ENCODE measurements at regions of chr15 and their contacts with region 1.

Region 1: DNA sequence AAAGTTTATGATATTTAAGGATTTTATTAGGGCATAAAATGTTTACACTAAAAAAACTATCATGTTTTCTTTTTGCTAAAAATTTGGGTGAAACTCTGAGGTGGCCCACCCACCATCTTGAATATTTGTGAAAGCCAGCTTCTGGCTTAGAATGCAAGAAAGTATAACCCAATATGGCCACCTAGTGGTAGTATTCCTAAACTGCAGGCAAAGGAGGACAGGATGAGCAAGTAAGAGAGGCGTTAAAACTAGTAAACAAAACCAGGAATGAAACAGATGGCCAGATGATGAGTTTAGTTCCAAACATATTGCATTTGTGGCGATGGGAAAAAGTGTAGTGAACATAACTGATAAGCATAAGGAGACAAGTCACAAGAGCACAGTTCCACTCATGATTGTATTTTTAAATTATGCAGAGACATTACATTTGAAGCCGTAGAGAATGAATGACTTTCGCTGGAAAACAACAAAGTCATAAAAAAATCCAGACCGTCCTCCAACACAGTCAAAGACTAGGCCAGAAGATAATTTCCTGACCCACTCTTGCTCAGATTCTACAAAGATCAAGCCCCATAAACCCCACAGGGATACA is 103.3 kb upstream of the PRTG start:
- DNase-seq: peak; percentile 61
- H3K4me3 Mint-ChIP-seq: no peak overlapping the region
- H3K27ac Mint-ChIP-seq: no peak overlapping the region
- H3K4me1 Mint-ChIP-seq: no peaks in the 10 kb centered on the region
- H3K27me3 Mint-ChIP-seq: no peaks in the 10 kb centered on the region

Region 2: GRCh38 chr15:55526559-55527036 is 319.6 kb before region 1 on chr15:
- CTCF ChIA-PET with region 1: interaction called, 6 read pairs
- intact Hi-C with region 1: loop called (anchors 10 kb)
- DNase-seq: peak; percentile 31
- H3K4me3 Mint-ChIP-seq: no peak overlapping the region
- H3K27ac Mint-ChIP-seq: no peak overlapping the region
- H3K4me1 Mint-ChIP-seq: no peaks in the 10 kb centered on the region
- H3K27me3 Mint-ChIP-seq: peaks cover 24% of the 10 kb centered on the region

Region 3: DNA sequence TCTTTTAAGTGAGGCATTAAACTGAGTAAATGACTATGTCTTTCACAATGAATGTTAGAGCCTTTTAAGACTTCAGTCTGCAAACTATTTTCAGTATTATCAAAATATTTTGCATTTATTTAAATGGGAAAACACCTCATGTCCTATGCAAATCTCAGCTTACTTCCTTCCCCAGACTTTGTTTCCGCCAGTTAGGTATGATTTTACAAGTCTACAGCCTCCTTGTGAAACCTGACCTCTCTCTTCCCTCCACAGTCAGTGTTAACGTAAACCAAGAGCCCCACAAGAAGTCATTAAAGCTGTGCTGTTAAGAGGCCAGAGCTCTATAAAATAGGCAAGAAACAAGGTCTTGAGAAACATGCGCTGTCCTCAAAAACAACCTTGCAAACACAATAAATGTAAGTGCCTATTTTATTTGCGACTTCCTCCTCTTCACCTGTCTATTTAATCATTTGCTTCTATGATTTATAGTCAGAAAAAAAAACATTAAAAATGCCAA is 151.5 kb before region 1 on chr15:
- CTCF ChIA-PET with region 1: no interaction called
- intact Hi-C with region 1: no loop called
- DNase-seq: no peak
- H3K4me3 Mint-ChIP-seq: no peak overlapping the region
- H3K27ac Mint-ChIP-seq: no peak overlapping the region
- H3K4me1 Mint-ChIP-seq: peaks cover 3% of the 10 kb centered on the region
- H3K27me3 Mint-ChIP-seq: peaks cover 15% of the 10 kb centered on the region

Region 4: DNA sequence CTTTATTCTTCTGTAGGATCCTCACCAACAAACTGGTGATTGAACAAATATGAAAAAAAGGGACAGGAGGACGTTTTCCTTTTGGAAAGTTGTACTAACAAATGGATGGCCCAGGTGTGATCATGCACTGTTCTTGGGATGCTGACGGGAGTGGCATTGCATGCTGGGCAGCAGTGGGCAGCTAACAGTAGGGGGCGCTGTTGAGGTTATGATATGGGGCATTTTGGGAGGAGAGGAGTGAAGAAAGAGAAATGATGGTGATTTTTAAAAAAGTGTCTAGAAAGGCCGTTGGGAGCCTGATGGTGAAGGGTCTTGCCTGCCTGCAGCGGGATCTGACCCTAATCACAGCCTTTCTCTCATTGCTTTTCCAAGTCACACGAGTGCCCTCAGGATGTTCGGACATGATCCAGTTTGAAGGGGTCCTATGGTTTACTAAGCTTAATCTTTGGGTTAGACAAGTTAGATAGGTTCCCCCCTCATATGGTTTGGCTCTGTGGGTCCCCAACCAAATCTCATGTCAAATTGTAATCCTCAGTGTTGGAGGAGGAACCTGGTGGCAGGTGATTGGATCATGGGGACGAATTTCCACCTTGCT is 57.0 kb before region 1 on chr15:
- CTCF ChIA-PET with region 1: interaction called, 5 read pairs
- intact Hi-C with region 1: loop called (anchors 1 kb)
- DNase-seq: peak; percentile 74
- H3K4me3 Mint-ChIP-seq: no peak overlapping the region
- H3K27ac Mint-ChIP-seq: no peak overlapping the region
- H3K4me1 Mint-ChIP-seq: no peaks in the 10 kb centered on the region
- H3K27me3 Mint-ChIP-seq: peaks cover 9% of the 10 kb centered on the region

Region 5: GRCh38 chr15:55959744-55960447 is 113.7 kb after region 1 on chr15:
- CTCF ChIA-PET with region 1: no interaction called
- intact Hi-C with region 1: no loop called
- DNase-seq: no peak
- H3K4me3 Mint-ChIP-seq: no peak overlapping the region
- H3K27ac Mint-ChIP-seq: no peak overlapping the region
- H3K4me1 Mint-ChIP-seq: no peaks in the 10 kb centered on the region
- H3K27me3 Mint-ChIP-seq: no peaks in the 10 kb centered on the region

Region 6: DNA sequence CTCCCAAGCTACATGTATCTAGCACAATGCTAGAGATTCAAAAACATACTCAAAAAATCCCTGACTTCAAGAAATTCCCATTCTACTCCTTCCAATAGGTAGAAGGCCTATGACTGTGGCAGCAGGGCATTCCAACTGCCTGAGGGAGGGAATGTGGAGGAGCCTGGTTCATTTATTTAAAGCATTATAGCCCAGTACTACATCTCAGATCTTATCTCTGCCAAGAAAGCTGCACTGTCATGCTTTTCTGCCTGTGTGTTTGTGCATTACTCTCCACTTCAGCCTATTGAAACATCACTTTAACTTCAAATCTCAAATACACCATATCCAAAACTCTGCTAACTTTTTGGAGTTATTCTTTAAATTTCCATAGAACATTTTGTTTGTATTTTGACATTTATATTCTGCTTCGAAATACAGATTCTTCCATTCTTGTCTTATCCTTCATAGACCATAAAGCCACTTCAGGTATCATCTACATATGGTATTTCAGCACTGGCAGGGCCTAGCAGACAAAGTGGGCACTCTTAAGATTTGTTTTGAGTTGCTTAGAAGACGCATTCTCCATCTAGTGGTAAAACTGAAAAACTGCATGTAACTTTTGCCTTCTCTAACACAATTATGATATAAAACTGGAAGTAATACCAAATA is 206.3 kb after region 1 on chr15:
- CTCF ChIA-PET with region 1: no interaction called
- intact Hi-C with region 1: loop called (anchors 5 kb)
- DNase-seq: peak; percentile 21
- H3K4me3 Mint-ChIP-seq: no peak overlapping the region
- H3K27ac Mint-ChIP-seq: no peak overlapping the region
- H3K4me1 Mint-ChIP-seq: peaks cover 2% of the 10 kb centered on the region
- H3K27me3 Mint-ChIP-seq: no peaks in the 10 kb centered on the region